Activated CD8-positive, alpha-beta T cell treated with anti-CD3 and anti-CD28 coated beads, Interleukin-2, amount 10 ng/mL, durations not matched to agents 7 days and 5 days (primary cell): ENCODE measurements at regions of chr7 and their contacts with region 1.

Region 1: GRCh38 chr7:22782616-22783232 is 39.9 kb downstream of the TOMM7 start:
- DNase-seq: peak; percentile 85
- ATAC-seq: peak; percentile 92
- H3K4me3 Mint-ChIP-seq: no peak overlapping the region
- H3K27ac Mint-ChIP-seq: no peak overlapping the region
- H3K4me1 Mint-ChIP-seq: no peaks in the 10 kb centered on the region
- H3K27me3 Mint-ChIP-seq: peaks cover 22% of the 10 kb centered on the region

Region 2: GRCh38 chr7:22377703-22378102 is 405.0 kb before region 1 on chr7:
- CTCF ChIA-PET with region 1: no interaction called
- POLR2A ChIA-PET with region 1: no interaction called
- DNase-seq: no peak
- ATAC-seq: no peak
- H3K4me3 Mint-ChIP-seq: no peak overlapping the region
- H3K27ac Mint-ChIP-seq: no peak overlapping the region
- H3K4me1 Mint-ChIP-seq: no peaks in the 10 kb centered on the region
- H3K27me3 Mint-ChIP-seq: peaks cover 20% of the 10 kb centered on the region

Region 3: GRCh38 chr7:22559829-22560489 is 222.8 kb before region 1 on chr7:
- CTCF ChIA-PET with region 1: interaction called, 90 read pairs
- POLR2A ChIA-PET with region 1: no interaction called
- DNase-seq: peak; percentile 86
- ATAC-seq: peak; percentile 79
- H3K4me3 Mint-ChIP-seq: no peak overlapping the region
- H3K27ac Mint-ChIP-seq: no peak overlapping the region
- H3K4me1 Mint-ChIP-seq: peaks cover 51% of the 10 kb centered on the region
- H3K27me3 Mint-ChIP-seq: peaks cover 14% of the 10 kb centered on the region

Region 4: GRCh38 chr7:22627136-22627535 is 155.6 kb before region 1 on chr7:
- CTCF ChIA-PET with region 1: no interaction called
- POLR2A ChIA-PET with region 1: no interaction called
- DNase-seq: no peak
- ATAC-seq: no peak
- H3K4me3 Mint-ChIP-seq: no peak overlapping the region
- H3K27ac Mint-ChIP-seq: no peak overlapping the region
- H3K4me1 Mint-ChIP-seq: peaks cover 2% of the 10 kb centered on the region
- H3K27me3 Mint-ChIP-seq: peaks cover 42% of the 10 kb centered on the region

Region 5: GRCh38 chr7:22809902-22810642 is 27.3 kb after region 1 on chr7:
- CTCF ChIA-PET with region 1: interaction called, 10 read pairs
- POLR2A ChIA-PET with region 1: no interaction called
- DNase-seq: no peak
- ATAC-seq: no peak
- H3K4me3 Mint-ChIP-seq: no peak overlapping the region
- H3K27ac Mint-ChIP-seq: no peak overlapping the region
- H3K4me1 Mint-ChIP-seq: peaks cover 6% of the 10 kb centered on the region
- H3K27me3 Mint-ChIP-seq: peaks cover 2% of the 10 kb centered on the region

Region 6: GRCh38 chr7:22841954-22842353 is 59.2 kb after region 1 on chr7:
- CTCF ChIA-PET with region 1: no interaction called
- POLR2A ChIA-PET with region 1: no interaction called
- DNase-seq: no peak
- ATAC-seq: no peak
- H3K4me3 Mint-ChIP-seq: no peak overlapping the region
- H3K27ac Mint-ChIP-seq: no peak overlapping the region
- H3K4me1 Mint-ChIP-seq: no peaks in the 10 kb centered on the region
- H3K27me3 Mint-ChIP-seq: peaks cover 8% of the 10 kb centered on the region

Region 7: DNA sequence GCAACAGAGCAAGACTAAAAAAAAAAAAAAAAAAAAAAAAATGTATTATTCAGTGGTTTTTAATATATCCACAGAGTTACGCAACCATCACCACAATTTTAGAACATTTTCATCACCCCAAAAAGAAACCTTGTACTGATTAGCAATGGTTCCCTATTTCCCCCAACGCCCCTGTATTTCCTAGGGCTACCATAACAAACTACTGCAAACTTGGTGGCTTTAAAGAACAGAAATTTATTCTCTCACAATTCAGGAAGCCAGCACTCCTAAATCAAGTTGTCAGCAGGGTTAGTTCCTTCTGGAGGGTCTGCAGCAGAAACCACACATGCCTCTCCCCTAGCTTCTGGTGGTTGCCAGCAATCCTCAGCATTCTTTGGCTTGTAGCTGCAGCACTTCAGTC is 393.2 kb after region 1 on chr7:
- CTCF ChIA-PET with region 1: no interaction called
- POLR2A ChIA-PET with region 1: no interaction called
- DNase-seq: no peak
- ATAC-seq: no peak
- H3K4me3 Mint-ChIP-seq: no peak overlapping the region
- H3K27ac Mint-ChIP-seq: no peak overlapping the region
- H3K4me1 Mint-ChIP-seq: peaks cover 6% of the 10 kb centered on the region
- H3K27me3 Mint-ChIP-seq: peaks cover 4% of the 10 kb centered on the region